ENCODE measurements at regions of chr7 and their contacts with region 1.

Region 1: DNA sequence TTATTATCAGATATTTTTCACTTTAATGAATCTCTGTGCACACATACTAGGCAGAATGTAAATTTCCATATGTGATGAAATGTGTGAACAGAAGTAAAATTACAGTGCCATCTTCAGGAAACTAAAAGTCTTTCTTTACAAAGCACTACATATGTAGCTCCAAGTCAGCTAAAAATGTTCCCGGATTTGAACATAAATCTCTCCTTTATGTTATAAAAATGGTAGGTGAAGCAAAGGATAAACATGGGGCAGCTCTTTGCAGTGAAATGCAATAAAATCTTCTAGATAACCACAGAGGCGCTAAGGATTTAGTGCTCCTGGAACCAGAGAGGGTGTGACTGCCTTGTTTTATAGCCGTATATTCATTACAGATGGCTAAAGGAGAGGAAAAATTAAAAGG is 104.9 kb upstream of the C7orf33 start:
- DNase-seq: peak in 2 of 5 donors; percentile 42 to 66
- H3K4me3 ChIP-seq: no peak overlapping the region
- H3K27ac ChIP-seq: no peak overlapping the region
- H3K4me1 ChIP-seq: no peaks in the 10 kb centered on the region
- H3K27me3 ChIP-seq: no peaks in the 10 kb centered on the region
- CTCF ChIP-seq: no peak

Region 2: DNA sequence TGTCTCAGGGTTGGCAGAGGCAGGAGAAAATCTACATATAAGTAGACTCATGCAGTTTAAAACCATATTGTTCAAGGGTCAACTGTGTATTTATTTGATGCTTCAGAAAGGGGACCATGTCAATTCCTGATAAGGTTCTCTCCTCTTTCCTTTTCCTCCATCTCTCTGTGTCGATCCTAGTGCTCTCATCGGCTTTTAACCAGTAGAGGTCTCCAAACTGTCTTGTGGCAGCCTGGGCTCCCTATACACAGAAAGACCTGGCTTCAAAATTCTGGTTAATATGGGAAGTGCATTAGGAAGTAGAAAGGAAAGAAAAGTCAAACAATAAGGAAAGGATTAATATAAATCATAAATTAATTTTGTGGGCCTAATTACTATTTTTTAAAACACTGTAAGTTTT is 199.5 kb before region 1 on chr7:
- intact Hi-C with region 1: loop called (anchors 10 kb)
- DNase-seq: peak in 2 of 5 donors; percentile 38 to 46
- H3K4me3 ChIP-seq: no peak overlapping the region
- H3K27ac ChIP-seq: no peak overlapping the region
- H3K4me1 ChIP-seq: no peaks in the 10 kb centered on the region
- H3K27me3 ChIP-seq: no peaks in the 10 kb centered on the region
- CTCF ChIP-seq: peak; percentile 26